Activated T-helper 1 cell treated with anti-CD3 and anti-CD28 coated beads, Interleukin-12 subunit alpha, Interleukin-12 subunit beta, Interleukin-2, Interleukin-4 antibody, amounts not matched to agents 30 ng/mL and 10 ng/mL and 1 ng/mL, durations not matched to agents 14 hours and 24 hours and 36 hours (primary cell): ENCODE measurements at regions of chr1 and their contacts with region 1.

Region 1: GRCh38 chr1:154183045-154183915 is 8.6 kb downstream of the TPM3 start:
- DNase-seq: peak; percentile 93
- H3K4me3 Mint-ChIP-seq: peak overlapping the region; percentile 99
- H3K27ac Mint-ChIP-seq: peak overlapping the region; percentile 99
- H3K4me1 Mint-ChIP-seq: peaks cover 53% of the 10 kb centered on the region
- H3K27me3 Mint-ChIP-seq: peaks cover 6% of the 10 kb centered on the region

Region 2: GRCh38 chr1:153783233-153784190 is 399.8 kb before region 1 on chr1:
- intact Hi-C with region 1: loop called (anchors 2 kb)
- DNase-seq: peak; percentile 90
- H3K4me3 Mint-ChIP-seq: peak overlapping the region; percentile 88
- H3K27ac Mint-ChIP-seq: peak overlapping the region; percentile 92
- H3K4me1 Mint-ChIP-seq: no peaks in the 10 kb centered on the region
- H3K27me3 Mint-ChIP-seq: peaks cover 16% of the 10 kb centered on the region

Region 3: DNA sequence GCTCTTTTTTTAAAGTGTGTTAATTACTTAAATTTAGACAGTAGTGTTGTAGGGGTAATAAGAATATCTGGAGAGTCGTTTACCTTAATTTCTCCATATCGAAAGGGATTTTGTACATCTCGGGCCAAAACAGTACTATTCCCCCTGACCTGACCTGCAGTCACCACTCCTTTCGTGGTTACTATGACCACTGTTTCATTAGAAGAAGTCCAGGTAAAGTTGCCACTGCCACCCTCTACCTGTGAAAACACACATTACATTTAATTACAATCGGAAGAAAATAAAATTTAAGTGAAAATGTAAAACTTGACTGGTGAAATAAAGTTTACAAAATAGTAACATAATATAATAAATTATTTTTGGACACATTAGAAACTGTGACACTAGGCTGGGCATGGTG is 65.6 kb before region 1 on chr1:
- intact Hi-C with region 1: no loop called
- DNase-seq: no peak
- H3K4me3 Mint-ChIP-seq: no peak overlapping the region
- H3K27ac Mint-ChIP-seq: no peak overlapping the region
- H3K4me1 Mint-ChIP-seq: peaks cover 16% of the 10 kb centered on the region
- H3K27me3 Mint-ChIP-seq: peaks cover 10% of the 10 kb centered on the region

Region 4: GRCh38 chr1:154157520-154158306 is 25.6 kb before region 1 on chr1:
- intact Hi-C with region 1: loop called (anchors 1 kb)
- DNase-seq: peak; percentile 79
- H3K4me3 Mint-ChIP-seq: peak overlapping the region; percentile 62
- H3K27ac Mint-ChIP-seq: peak overlapping the region; percentile 70
- H3K4me1 Mint-ChIP-seq: peaks cover 65% of the 10 kb centered on the region
- H3K27me3 Mint-ChIP-seq: no peaks in the 10 kb centered on the region

Region 5: GRCh38 chr1:154265586-154265985 is 82.3 kb after region 1 on chr1:
- intact Hi-C with region 1: loop called (anchors 1 kb)
- DNase-seq: no peak
- H3K4me3 Mint-ChIP-seq: peak overlapping the region; percentile 13
- H3K27ac Mint-ChIP-seq: peak overlapping the region; percentile 91
- H3K4me1 Mint-ChIP-seq: peaks cover 45% of the 10 kb centered on the region
- H3K27me3 Mint-ChIP-seq: no peaks in the 10 kb centered on the region

Region 6: DNA sequence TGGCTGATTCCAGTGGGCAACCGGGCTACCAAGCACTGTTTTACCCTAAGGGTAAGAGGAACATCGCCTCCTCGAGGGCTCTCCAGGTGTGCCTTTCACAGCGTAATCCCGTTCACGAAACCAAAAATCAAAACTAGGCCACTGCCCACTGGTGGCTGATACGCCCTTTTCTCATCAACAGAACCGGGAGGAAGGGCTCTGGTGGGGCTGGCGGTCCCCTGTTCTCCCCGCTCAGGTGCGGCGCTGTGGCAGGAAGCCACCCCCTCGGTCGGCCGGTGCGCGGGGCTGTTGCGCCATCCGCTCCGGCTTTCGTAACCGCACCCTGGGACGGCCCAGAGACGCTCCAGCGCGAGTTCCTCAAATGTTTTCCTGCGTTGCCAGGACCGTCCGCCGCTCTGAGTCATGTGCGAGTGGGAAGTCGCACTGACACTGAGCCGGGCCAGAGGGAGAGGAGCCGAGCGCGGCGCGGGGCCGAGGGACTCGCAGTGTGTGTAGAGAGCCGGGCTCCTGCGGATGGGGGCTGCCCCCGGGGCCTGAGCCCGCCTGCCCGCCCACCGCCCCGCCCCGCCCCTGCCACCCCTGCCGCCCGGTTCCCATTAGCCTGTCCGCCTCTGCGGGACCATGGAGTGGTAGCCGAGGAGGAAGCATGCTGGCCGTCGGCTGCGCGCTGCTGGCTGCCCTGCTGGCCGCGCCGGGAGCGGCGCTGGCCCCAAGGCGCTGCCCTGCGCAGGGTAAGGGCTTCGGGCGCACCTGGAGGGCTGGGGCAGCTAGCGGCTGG is 221.9 kb after region 1 on chr1 and contains the start of gene IL6R:
- intact Hi-C with region 1: loop called (anchors 1 kb)
- DNase-seq: peak; percentile 62
- H3K4me3 Mint-ChIP-seq: peak within 1 kb of the TSS; percentile 86
- H3K27ac Mint-ChIP-seq: peak within 1 kb of the TSS; percentile 77
- H3K4me1 Mint-ChIP-seq: peaks cover 73% of the 10 kb centered on the region
- H3K27me3 Mint-ChIP-seq: no peaks in the 10 kb centered on the region
- total RNA-seq, gene IL6R: 4.9 and 5.0 TPM in 2 replicates

Region 7: GRCh38 chr1:154936555-154937084 is 753.3 kb after region 1 on chr1 and contains the start of gene PMVK:
- intact Hi-C with region 1: loop called (anchors 1 kb)
- DNase-seq: peak; percentile 92
- H3K4me3 Mint-ChIP-seq: peak within 1 kb of the TSS; percentile 93
- H3K27ac Mint-ChIP-seq: peak within 1 kb of the TSS; percentile 95
- H3K4me1 Mint-ChIP-seq: peaks cover 53% of the 10 kb centered on the region
- H3K27me3 Mint-ChIP-seq: no peaks in the 10 kb centered on the region
- total RNA-seq, gene PMVK: 42.5 and 43.3 TPM in 2 replicates